PC-9 (cell line): ENCODE measurements at regions of chr2 and their contacts with region 1.

Region 1: GRCh38 chr2:233186851-233187250 is 64.6 kb upstream of the ATG16L1 start:
- DNase-seq: no peak
- H3K4me3 ChIP-seq: no peak overlapping the region
- H3K27ac ChIP-seq: no peak overlapping the region
- H3K4me1 ChIP-seq: no peaks in the 10 kb centered on the region
- H3K27me3 ChIP-seq: no peaks in the 10 kb centered on the region
- CTCF ChIP-seq: no peak

Region 2: DNA sequence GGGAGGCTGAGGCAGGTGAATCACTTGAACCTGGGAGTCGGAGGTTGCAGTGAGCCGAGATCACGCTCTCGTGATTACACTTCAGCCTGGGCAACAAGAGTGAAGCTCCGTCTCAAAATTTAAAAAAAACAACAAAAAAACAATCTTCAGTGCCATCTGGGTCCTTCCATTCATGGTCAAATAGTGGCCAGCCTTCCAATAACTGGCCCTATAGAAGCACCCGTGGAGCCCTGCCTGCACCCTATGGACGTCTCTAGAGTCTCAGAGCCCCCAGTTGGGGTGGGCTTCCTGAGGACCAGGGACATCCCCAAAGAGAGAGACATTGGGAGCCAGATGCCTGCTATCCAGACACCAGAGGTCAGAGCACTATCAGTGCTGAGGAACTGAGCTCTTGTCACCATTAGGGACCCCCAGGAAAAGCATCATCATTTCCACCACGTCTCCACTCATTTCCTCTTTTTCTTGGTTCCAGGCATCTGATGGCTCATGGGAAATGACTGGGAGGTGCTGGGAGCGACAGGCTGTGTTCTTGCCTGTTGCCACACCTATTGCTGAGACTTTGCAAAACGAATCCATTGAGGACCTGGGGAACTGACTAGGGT is 145.0 kb before region 1 on chr2:
- CTCF ChIA-PET with region 1: no interaction called
- POLR2A ChIA-PET with region 1: no interaction called
- intact Hi-C with region 1: no loop called
- DNase-seq: no peak
- H3K4me3 ChIP-seq: no peak overlapping the region
- H3K27ac ChIP-seq: no peak overlapping the region
- H3K4me1 ChIP-seq: 0 out of 2 replicates have a peak, but pooled peaks cover 5% of the 10 kb centered on the region
- H3K27me3 ChIP-seq: no peaks in the 10 kb centered on the region
- CTCF ChIP-seq: no peak

Region 3: GRCh38 chr2:233210843-233211547 is 24.1 kb after region 1 on chr2:
- CTCF ChIA-PET with region 1: no interaction called
- POLR2A ChIA-PET with region 1: interaction called, 10 read pairs
- intact Hi-C with region 1: no loop called
- DNase-seq: peak; percentile 92 to 97
- H3K4me3 ChIP-seq: no peak overlapping the region
- H3K27ac ChIP-seq: peak overlapping the region; percentile 28; the same call in 1 of the 2 replicates
- H3K4me1 ChIP-seq: peaks cover 57% of the 10 kb centered on the region
- H3K27me3 ChIP-seq: no peaks in the 10 kb centered on the region
- CTCF ChIP-seq: no peak